Heart right ventricle (tissue), 16 donors: ENCODE measurements at regions of chr12 and their contacts with region 1.

Region 1: GRCh38 chr12:55188974-55189556 is 31.8 kb upstream of the OR10A7 start:
- DNase-seq: peak in 1 of 2 donors; percentile 49
- ATAC-seq: peak in 4 of 8 donors; percentile 48 to 59 (median 54)
- H3K4me3 ChIP-seq: no peak overlapping the region
- H3K27ac ChIP-seq: no peak overlapping the region
- H3K4me1 ChIP-seq: no peaks in the 10 kb centered on the region
- H3K27me3 ChIP-seq: peaks cover 0 to 17% (median 0%) of the 10 kb centered on the region in 7 donors
- CTCF ChIP-seq: peak; percentile 32 to 81 (median 75)

Region 2: GRCh38 chr12:55034218-55034617 is 154.8 kb before region 1 on chr12:
- intact Hi-C with region 1: no loop called
- DNase-seq: no peak
- ATAC-seq: no peak
- H3K4me3 ChIP-seq: no peak overlapping the region
- H3K27ac ChIP-seq: no peak overlapping the region
- H3K4me1 ChIP-seq: peaks cover 0 to 21% (median 0%) of the 10 kb centered on the region in 9 donors
- H3K27me3 ChIP-seq: peaks cover 0 to 46% (median 9%) of the 10 kb centered on the region in 7 donors
- CTCF ChIP-seq: no peak

Region 3: GRCh38 chr12:55126106-55126505 is 63.0 kb before region 1 on chr12 and contains the start of gene OR9K2:
- intact Hi-C with region 1: no loop called
- DNase-seq: no peak
- ATAC-seq: no peak
- H3K4me3 ChIP-seq: no peak within 1 kb of the TSS
- H3K27ac ChIP-seq: no peak within 1 kb of the TSS
- H3K4me1 ChIP-seq: no peaks in the 10 kb centered on the region
- H3K27me3 ChIP-seq: peaks cover 0 to 18% (median under 1%) of the 10 kb centered on the region in 7 donors
- CTCF ChIP-seq: no peak
- total RNA-seq, gene OR9K2: not detected

Region 4: DNA sequence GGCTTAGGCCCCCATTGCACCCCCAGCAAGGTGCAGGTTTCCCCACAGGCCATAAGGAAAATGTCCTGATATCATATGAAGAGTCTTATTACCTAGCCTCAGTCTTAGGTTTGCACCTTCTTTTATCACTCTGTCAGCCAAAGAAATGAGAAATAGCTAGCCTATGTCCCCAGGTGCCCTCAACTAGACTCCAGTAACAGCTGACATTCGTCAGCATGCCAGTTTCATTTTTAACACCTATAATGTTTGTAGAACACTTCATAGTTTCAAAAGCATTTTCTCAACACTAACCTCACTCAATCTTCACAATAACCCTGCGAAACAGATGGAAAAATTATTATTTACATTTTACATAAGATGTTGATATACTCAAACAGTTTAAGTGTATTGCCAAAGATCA is 423.6 kb after region 1 on chr12:
- intact Hi-C with region 1: loop called in 6 of 10 experiments (anchors 2 to 5 kb)
- DNase-seq: no peak
- ATAC-seq: no peak
- H3K4me3 ChIP-seq: no peak overlapping the region
- H3K27ac ChIP-seq: no peak overlapping the region
- H3K4me1 ChIP-seq: no peaks in the 10 kb centered on the region
- H3K27me3 ChIP-seq: peaks cover 0 to 5% (median 0%) of the 10 kb centered on the region in 7 donors
- CTCF ChIP-seq: no peak